Left ventricle myocardium inferior (tissue), 1 donor: ENCODE measurements at regions of chr2 and their contacts with region 1.

Region 1: DNA sequence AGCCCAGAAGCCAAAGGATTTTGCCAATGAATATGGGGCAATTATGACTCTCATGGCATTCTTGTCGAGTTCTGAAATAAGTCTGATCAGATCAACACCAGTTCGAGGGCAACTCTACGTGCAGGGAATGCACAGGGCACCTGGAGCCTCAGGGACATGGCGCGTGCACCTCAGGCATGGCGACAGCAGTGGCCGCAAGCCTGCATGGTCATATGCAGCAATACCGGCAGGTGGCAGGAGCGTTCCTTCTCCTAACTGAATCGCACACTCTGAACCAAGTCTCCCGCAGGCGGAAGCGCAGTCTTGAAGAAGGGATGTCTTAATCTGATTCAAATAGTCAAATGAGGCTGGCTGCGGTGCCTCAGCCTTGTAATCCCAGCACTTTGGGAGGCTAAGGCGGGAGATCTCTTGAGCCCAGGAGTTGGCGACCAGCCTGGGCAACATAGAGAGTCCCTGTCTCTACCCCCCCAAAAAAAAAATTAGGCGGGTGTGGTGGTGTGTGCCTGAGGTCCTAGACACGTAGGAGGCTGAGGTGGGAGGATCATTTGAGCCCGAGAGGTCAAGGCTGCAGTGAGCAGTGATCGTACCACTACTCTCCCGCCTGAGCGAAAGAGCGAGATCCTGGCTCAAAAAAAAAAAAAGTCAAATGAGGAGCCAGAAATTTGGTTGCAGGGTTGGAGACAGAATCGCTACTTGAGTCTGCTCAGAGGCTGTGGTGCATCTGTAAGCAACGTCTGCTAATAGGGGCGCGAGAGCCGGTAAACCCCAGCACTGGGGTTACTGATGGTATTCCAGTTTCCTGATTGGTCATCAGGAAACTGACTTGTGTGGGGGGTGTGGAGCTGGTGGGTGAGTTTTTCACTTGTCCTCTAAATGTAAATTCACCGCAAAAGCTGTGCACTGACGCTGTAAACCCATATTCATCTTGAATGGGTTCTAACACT is 28.8 kb downstream of the FHL2 start:
- DNase-seq: peak; percentile 81
- H3K4me3 ChIP-seq: no peak overlapping the region
- H3K27ac ChIP-seq: peak overlapping the region; percentile 85
- H3K4me1 ChIP-seq: peaks cover 80% of the 10 kb centered on the region
- H3K27me3 ChIP-seq: no peaks in the 10 kb centered on the region
- CTCF ChIP-seq: peak; percentile 89

Region 2: DNA sequence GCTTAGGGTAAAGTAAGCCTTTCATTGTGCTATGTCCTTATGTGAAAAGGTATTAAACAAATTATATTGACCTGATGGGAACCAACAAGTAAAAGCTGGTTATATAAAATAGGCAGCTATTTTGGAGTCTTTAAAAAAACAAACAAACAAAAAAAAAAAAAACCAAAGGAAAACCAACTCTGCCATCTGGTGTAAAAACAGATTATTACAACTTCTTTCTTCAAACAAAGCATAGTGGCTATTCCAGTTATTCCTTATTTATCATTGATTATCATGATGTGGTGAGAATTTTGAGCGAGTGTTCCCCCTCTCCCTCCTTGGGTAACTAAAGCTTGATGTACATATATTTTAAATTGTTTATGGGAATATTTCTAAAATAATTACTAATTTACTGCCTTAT is 151.2 kb after region 1 on chr2:
- intact Hi-C with region 1: loop called (anchors 5 kb)
- DNase-seq: no peak
- H3K4me3 ChIP-seq: no peak overlapping the region
- H3K27ac ChIP-seq: peak overlapping the region; percentile 92
- H3K4me1 ChIP-seq: peaks cover 52% of the 10 kb centered on the region
- H3K27me3 ChIP-seq: no peaks in the 10 kb centered on the region
- CTCF ChIP-seq: peak; percentile 68

Region 3: DNA sequence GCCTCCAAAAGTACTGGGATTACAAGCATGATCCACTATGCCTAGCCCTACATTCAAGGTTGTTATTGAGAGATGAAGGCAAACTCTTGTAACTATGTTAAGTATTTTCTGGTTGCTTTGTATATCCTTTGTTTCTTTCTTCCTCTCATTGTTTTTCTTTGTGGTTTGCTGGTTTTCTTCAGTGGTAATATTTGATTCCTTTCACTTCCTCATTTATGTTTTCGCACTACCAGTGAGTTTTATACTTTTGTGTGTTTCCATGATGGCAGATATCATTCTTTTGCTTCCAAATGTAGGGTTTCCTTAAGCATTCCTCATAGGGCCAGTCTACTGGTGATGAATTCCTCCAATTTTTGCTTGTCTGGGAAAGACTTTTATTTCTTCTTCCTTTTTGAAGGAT is 464.9 kb after region 1 on chr2:
- intact Hi-C with region 1: no loop called
- DNase-seq: no peak
- H3K4me3 ChIP-seq: no peak overlapping the region
- H3K27ac ChIP-seq: no peak overlapping the region
- H3K4me1 ChIP-seq: peaks cover 28% of the 10 kb centered on the region
- H3K27me3 ChIP-seq: no peaks in the 10 kb centered on the region
- CTCF ChIP-seq: no peak